Naive thymus-derived CD4-positive, alpha-beta T cell (primary cell): ENCODE measurements at regions of chr9 and their contacts with region 1.

Region 1: GRCh38 chr9:2014696-2015580 is at the start of gene SMARCA2:
- DNase-seq: peak; percentile 96 to 98 (median 97)
- ATAC-seq: peak; percentile 90
- H3K4me3 ChIP-seq: peak within 1 kb of the TSS; percentile 98
- H3K4me3 Mint-ChIP-seq: peak within 1 kb of the TSS; percentile 93 to 100 (median 98)
- H3K27ac ChIP-seq: peak within 1 kb of the TSS; percentile 92
- H3K27ac Mint-ChIP-seq: peak within 1 kb of the TSS; percentile 97 to 100 (median 99)
- H3K4me1 ChIP-seq: peaks cover 16 to 18% of the 10 kb centered on the region in 2 donors
- H3K4me1 Mint-ChIP-seq: peaks cover 21 to 60% (median 32%) of the 10 kb centered on the region in 7 donors
- H3K27me3 ChIP-seq: no peaks in the 10 kb centered on the region
- H3K27me3 Mint-ChIP-seq: peaks cover 0 to 24% (median 0%) of the 10 kb centered on the region in 5 donors
- total RNA-seq, gene SMARCA2: 233 to 294 (median 258) TPM

Region 2: GRCh38 chr9:1804128-1804865 is 210.6 kb before region 1 on chr9:
- CTCF ChIA-PET with region 1: no interaction called
- POLR2A ChIA-PET with region 1: no interaction called
- intact Hi-C with region 1: loop called in 1 of 2 experiments (anchors 5 kb)
- DNase-seq: peak in 1 of 9 donors; percentile 3
- ATAC-seq: no peak
- H3K4me3 ChIP-seq: no peak overlapping the region
- H3K4me3 Mint-ChIP-seq: no peak overlapping the region
- H3K27ac ChIP-seq: no peak overlapping the region
- H3K27ac Mint-ChIP-seq: no peak overlapping the region
- H3K4me1 ChIP-seq: no peaks in the 10 kb centered on the region
- H3K4me1 Mint-ChIP-seq: peaks cover 0 to 4% (median 0%) of the 10 kb centered on the region in 7 donors
- H3K27me3 ChIP-seq: no peaks in the 10 kb centered on the region
- H3K27me3 Mint-ChIP-seq: no peaks in the 10 kb centered on the region

Region 3: GRCh38 chr9:2000314-2000713 is 14.6 kb before region 1 on chr9:
- CTCF ChIA-PET with region 1: interaction called, 4 read pairs
- POLR2A ChIA-PET with region 1: interaction called, 12 read pairs
- intact Hi-C with region 1: no loop called
- DNase-seq: no peak
- ATAC-seq: peak; percentile 32
- H3K4me3 ChIP-seq: no peak overlapping the region
- H3K4me3 Mint-ChIP-seq: no peak overlapping the region
- H3K27ac ChIP-seq: no peak overlapping the region
- H3K27ac Mint-ChIP-seq: no peak overlapping the region
- H3K4me1 ChIP-seq: peaks cover 0 to 9% of the 10 kb centered on the region in 2 donors
- H3K4me1 Mint-ChIP-seq: peaks cover 5 to 22% (median 14%) of the 10 kb centered on the region in 7 donors
- H3K27me3 ChIP-seq: no peaks in the 10 kb centered on the region
- H3K27me3 Mint-ChIP-seq: peaks cover 0 to 27% (median 6%) of the 10 kb centered on the region in 5 donors

Region 4: DNA sequence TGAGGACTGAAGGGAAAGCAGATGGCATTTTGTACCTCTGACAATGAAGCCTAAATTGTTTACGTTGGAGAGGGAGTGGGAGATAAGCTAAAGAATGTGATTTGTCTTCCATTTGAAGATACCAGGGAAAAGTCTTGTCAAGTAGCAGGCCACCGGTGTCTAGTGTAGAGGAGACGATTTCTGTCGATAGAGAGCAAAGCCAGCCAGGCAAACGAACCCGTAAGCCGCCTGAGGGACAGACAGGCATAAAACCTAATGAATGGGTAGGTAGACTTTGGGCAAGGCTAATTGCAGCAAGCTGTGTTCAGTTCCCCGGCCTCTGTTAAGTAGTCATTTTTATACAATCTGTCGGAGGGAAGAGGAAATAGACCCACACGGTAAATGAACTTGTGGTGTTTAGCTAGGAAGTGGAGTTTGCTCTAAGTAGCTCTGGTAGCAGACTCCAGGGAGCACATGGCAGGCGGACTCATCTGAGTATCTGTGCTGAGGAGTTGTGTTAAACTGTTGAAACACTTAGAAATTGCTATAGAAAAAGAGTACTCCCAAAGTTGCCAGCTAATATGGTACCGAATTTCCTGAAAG is 29.0 kb after region 1 on chr9:
- CTCF ChIA-PET with region 1: interaction called, 3 read pairs
- POLR2A ChIA-PET with region 1: interaction called, 16 read pairs
- intact Hi-C with region 1: no loop called
- DNase-seq: peak in 1 of 9 donors; percentile 16
- ATAC-seq: peak; percentile 31
- H3K4me3 ChIP-seq: no peak overlapping the region
- H3K4me3 Mint-ChIP-seq: peak overlapping the region in 4 of 10 donors; percentile 26 to 46 (median 41)
- H3K27ac ChIP-seq: no peak overlapping the region
- H3K27ac Mint-ChIP-seq: peak overlapping the region; percentile 39 to 83 (median 80)
- H3K4me1 ChIP-seq: peaks cover 0 to 9% of the 10 kb centered on the region in 2 donors
- H3K4me1 Mint-ChIP-seq: peaks cover 19 to 73% (median 62%) of the 10 kb centered on the region in 7 donors
- H3K27me3 ChIP-seq: no peaks in the 10 kb centered on the region
- H3K27me3 Mint-ChIP-seq: no peaks in the 10 kb centered on the region

Region 5: GRCh38 chr9:2066312-2067273 is 51.7 kb after region 1 on chr9:
- CTCF ChIA-PET with region 1: interaction called, 10 read pairs
- POLR2A ChIA-PET with region 1: interaction called, 13 read pairs
- intact Hi-C with region 1: loop called (anchors 1 to 2 kb)
- DNase-seq: peak in 6 of 9 donors; percentile 21 to 52 (median 32)
- ATAC-seq: peak; percentile 67
- H3K4me3 ChIP-seq: no peak overlapping the region
- H3K4me3 Mint-ChIP-seq: no peak overlapping the region
- H3K27ac ChIP-seq: no peak overlapping the region
- H3K27ac Mint-ChIP-seq: peak overlapping the region in 3 of 9 donors; percentile 27 to 53 (median 30)
- H3K4me1 ChIP-seq: no peaks in the 10 kb centered on the region
- H3K4me1 Mint-ChIP-seq: peaks cover 0 to 10% (median 3%) of the 10 kb centered on the region in 7 donors
- H3K27me3 ChIP-seq: no peaks in the 10 kb centered on the region
- H3K27me3 Mint-ChIP-seq: no peaks in the 10 kb centered on the region

Region 6: GRCh38 chr9:2307480-2307879 is 292.5 kb after region 1 on chr9:
- CTCF ChIA-PET with region 1: no interaction called
- POLR2A ChIA-PET with region 1: no interaction called
- intact Hi-C with region 1: no loop called
- DNase-seq: no peak
- ATAC-seq: no peak
- H3K4me3 ChIP-seq: no peak overlapping the region
- H3K4me3 Mint-ChIP-seq: no peak overlapping the region
- H3K27ac ChIP-seq: no peak overlapping the region
- H3K27ac Mint-ChIP-seq: no peak overlapping the region
- H3K4me1 ChIP-seq: no peaks in the 10 kb centered on the region
- H3K4me1 Mint-ChIP-seq: no peaks in the 10 kb centered on the region
- H3K27me3 ChIP-seq: no peaks in the 10 kb centered on the region
- H3K27me3 Mint-ChIP-seq: peaks cover 0 to 27% (median 18%) of the 10 kb centered on the region in 5 donors

Region 7: DNA sequence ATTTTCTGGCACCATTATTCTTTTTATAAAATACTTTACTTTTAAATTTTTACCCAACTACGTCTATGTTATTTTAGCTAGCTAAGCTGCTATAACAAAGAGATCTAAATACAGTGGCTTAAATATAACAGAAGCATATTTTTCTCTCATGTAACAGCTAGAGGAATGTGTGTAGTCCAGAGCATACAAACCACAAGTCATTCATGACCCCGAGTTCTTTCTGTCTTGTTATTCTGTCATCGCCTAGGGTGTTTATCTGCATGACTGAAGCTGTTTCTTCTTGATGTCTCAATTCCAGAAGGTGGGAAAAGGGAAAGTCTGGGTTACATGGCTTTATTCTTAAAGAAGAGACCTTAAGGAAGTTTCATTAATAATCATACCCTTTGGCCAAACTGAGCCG is 1647.7 kb after region 1 on chr9:
- CTCF ChIA-PET with region 1: no interaction called
- POLR2A ChIA-PET with region 1: no interaction called
- intact Hi-C with region 1: no loop called
- DNase-seq: no peak
- ATAC-seq: no peak
- H3K4me3 ChIP-seq: no peak overlapping the region
- H3K4me3 Mint-ChIP-seq: no peak overlapping the region
- H3K27ac ChIP-seq: no peak overlapping the region
- H3K27ac Mint-ChIP-seq: no peak overlapping the region
- H3K4me1 ChIP-seq: no peaks in the 10 kb centered on the region
- H3K4me1 Mint-ChIP-seq: no peaks in the 10 kb centered on the region
- H3K27me3 ChIP-seq: no peaks in the 10 kb centered on the region
- H3K27me3 Mint-ChIP-seq: peaks cover 0 to 3% (median 0%) of the 10 kb centered on the region in 5 donors